ENCODE measurements at regions of chr19 and their contacts with region 1.

Region 1: GRCh38 chr19:37172368-37173366 is at the start of gene ZNF585A:
- DNase-seq: peak; percentile 95
- H3K4me3 ChIP-seq: peak within 1 kb of the TSS; percentile 77
- CTCF ChIP-seq: peak; percentile 41

Region 2: GRCh38 chr19:37074819-37075362 is 97.8 kb before region 1 on chr19:
- in situ Hi-C with region 1: no loop called
- DNase-seq: no peak
- H3K4me3 ChIP-seq: no peak overlapping the region
- CTCF ChIP-seq: no peak

Region 3: GRCh38 chr19:37227996-37228395 is 55.3 kb after region 1 on chr19:
- in situ Hi-C with region 1: loop called (anchors 5 kb)
- DNase-seq: no peak
- H3K4me3 ChIP-seq: no peak overlapping the region
- CTCF ChIP-seq: peak; percentile 50